PC-9 (cell line): ENCODE measurements at regions of chr1 and their contacts with region 1.

Region 1: GRCh38 chr1:12124693-12125421 is 41.9 kb upstream of the TNFRSF1B start:
- DNase-seq: peak in 1 of 2 experiments; percentile 66
- H3K4me3 ChIP-seq: no peak overlapping the region
- H3K27ac ChIP-seq: no peak overlapping the region
- H3K4me1 ChIP-seq: no peaks in the 10 kb centered on the region
- H3K27me3 ChIP-seq: no peaks in the 10 kb centered on the region
- CTCF ChIP-seq: peak; percentile 87

Region 2: GRCh38 chr1:11286735-11287410 is 838.0 kb before region 1 on chr1:
- CTCF ChIA-PET with region 1: no interaction called
- POLR2A ChIA-PET with region 1: no interaction called
- intact Hi-C with region 1: no loop called
- DNase-seq: no peak
- H3K4me3 ChIP-seq: no peak overlapping the region
- H3K27ac ChIP-seq: no peak overlapping the region
- H3K4me1 ChIP-seq: no peaks in the 10 kb centered on the region
- H3K27me3 ChIP-seq: no peaks in the 10 kb centered on the region
- CTCF ChIP-seq: no peak

Region 3: DNA sequence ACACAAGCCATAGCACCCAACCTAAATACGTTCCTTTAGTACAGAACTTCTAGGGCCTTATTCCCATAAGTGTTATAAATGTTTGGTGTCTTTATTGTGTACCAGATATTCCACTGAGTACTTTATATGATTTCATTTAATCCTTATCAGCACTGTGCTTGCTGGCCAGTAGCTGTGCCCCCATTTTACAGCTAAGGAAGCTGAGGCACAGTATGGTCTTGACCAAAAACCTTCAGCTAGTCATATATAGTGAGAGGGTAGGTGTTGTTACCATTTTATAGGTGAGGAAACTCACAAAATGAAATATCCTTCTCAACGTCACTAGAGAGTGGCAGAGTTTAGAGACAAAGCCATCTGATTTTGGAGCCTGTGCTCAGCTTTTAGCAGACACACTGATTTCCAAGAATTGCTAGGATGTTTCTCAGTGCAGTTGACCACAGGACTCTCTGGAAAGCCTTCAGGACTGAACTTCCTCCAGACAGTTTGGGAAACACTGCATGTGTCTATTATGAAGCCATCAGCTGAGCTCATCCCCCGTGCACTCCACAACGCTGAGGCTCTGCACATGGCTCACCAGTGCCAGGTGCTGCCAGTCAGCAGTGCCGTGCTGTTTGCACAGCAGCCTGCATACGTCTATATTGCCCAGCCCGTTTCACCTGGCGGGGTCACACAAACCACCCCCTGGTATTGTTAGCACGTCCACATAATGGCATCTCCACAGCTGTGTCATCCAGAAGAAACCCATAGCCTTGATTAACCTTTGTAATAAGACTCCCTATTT is 292.7 kb before region 1 on chr1:
- CTCF ChIA-PET with region 1: no interaction called
- POLR2A ChIA-PET with region 1: interaction called, 18 read pairs
- intact Hi-C with region 1: no loop called
- DNase-seq: no peak
- H3K4me3 ChIP-seq: no peak overlapping the region
- H3K27ac ChIP-seq: no peak overlapping the region
- H3K4me1 ChIP-seq: no peaks in the 10 kb centered on the region
- H3K27me3 ChIP-seq: no peaks in the 10 kb centered on the region
- CTCF ChIP-seq: no peak

Region 4: GRCh38 chr1:11847667-11848372 is 277.0 kb before region 1 on chr1 and contains the start of gene NPPA:
- CTCF ChIA-PET with region 1: no interaction called
- POLR2A ChIA-PET with region 1: no interaction called
- intact Hi-C with region 1: no loop called
- DNase-seq: no peak
- H3K4me3 ChIP-seq: no peak within 1 kb of the TSS
- H3K27ac ChIP-seq: no peak within 1 kb of the TSS
- H3K4me1 ChIP-seq: no peaks in the 10 kb centered on the region
- H3K27me3 ChIP-seq: peaks cover 23% of the 10 kb centered on the region
- CTCF ChIP-seq: no peak
- total RNA-seq, gene NPPA: not detected in 2 replicates

Region 5: DNA sequence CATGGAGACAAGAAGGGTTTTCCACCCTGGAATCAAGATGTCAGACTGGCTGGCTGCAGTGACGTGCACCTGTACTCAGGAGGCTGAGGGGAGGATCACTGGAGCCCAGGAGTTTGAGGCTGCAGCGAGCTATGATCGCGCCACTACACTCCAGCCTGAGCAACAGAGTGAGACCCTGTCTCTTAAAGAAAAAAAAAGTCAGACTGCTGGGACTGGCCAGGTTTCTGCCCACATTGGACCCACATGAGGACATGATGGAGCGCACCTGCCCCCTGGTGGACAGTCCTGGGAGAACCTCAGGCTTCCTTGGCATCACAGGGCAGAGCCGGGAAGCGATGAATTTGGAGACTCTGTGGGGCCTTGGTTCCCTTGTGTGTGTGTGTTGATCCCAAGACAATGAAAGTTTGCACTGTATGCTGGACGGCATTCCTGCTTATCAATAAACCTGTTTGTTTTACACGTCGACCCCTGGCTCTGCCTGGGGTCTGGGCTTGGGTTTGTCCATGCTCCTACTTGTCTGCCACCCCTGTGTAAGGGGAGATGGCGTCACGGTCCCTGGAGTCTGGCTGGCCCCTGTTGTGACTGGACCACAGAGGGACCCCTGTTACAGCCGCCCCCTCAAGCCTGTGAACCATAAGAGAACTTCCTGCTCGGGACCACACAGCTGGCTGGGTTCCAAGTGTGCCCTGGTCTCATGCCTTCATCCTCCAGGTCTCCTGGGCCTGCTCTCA is 84.1 kb after region 1 on chr1:
- CTCF ChIA-PET with region 1: no interaction called
- POLR2A ChIA-PET with region 1: no interaction called
- intact Hi-C with region 1: loop called (anchors 1 kb)
- DNase-seq: peak in 1 of 2 experiments; percentile 80
- H3K4me3 ChIP-seq: no peak overlapping the region
- H3K27ac ChIP-seq: no peak overlapping the region
- H3K4me1 ChIP-seq: no peaks in the 10 kb centered on the region
- H3K27me3 ChIP-seq: no peaks in the 10 kb centered on the region
- CTCF ChIP-seq: peak; percentile 89

Region 6: DNA sequence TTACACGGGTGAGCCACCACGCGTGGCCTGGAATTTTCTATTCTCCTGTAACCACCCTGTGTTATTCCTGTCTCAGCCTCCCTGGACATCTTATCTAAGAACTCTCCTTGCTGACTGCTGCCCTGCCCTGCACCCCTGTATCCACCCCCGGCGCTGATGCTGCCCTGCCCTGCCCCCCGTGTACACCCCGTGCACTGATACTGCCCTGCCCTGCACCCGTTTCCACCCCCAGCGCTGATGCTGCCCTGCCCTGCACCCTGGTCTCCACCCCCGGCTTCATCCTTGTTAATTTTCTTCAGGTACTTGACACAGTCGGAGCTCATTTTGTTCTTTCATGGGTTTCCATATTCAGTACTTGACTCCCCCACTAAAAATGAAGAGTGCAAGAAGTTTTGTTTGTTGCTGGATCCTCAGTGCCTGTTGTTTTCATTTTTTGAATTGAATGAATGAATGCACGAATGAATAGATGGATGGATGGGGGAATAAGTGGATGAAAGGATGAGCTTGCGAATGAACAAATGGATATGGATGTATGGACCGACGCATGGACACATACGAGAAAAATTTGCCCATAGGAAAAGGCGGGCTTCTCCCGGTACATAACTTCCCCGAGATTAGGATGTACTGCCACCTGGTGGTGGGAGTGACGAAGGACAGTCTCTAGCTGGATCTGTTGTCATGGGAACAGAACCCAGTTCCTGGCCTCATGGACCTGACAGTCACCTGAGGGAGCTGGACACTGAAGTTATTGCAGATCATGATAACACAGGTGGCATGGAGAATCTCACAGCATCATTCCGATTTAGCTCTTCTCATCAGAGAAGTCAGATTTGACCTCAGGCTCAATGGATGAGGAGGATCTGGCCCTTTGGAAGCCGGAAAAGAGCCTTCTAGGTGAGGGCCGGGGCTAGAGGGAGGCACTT is 533.9 kb after region 1 on chr1:
- CTCF ChIA-PET with region 1: no interaction called
- POLR2A ChIA-PET with region 1: no interaction called
- intact Hi-C with region 1: loop called (anchors 2 kb)
- DNase-seq: peak; percentile 62 to 64
- H3K4me3 ChIP-seq: no peak overlapping the region
- H3K27ac ChIP-seq: no peak overlapping the region
- H3K4me1 ChIP-seq: no peaks in the 10 kb centered on the region
- H3K27me3 ChIP-seq: no peaks in the 10 kb centered on the region
- CTCF ChIP-seq: peak; percentile 88